Activated CD8-positive, alpha-beta T cell treated with anti-CD3 and anti-CD28 coated beads for 36 hours (primary cell): ENCODE measurements at regions of chr2 and their contacts with region 1.

Region 1: DNA sequence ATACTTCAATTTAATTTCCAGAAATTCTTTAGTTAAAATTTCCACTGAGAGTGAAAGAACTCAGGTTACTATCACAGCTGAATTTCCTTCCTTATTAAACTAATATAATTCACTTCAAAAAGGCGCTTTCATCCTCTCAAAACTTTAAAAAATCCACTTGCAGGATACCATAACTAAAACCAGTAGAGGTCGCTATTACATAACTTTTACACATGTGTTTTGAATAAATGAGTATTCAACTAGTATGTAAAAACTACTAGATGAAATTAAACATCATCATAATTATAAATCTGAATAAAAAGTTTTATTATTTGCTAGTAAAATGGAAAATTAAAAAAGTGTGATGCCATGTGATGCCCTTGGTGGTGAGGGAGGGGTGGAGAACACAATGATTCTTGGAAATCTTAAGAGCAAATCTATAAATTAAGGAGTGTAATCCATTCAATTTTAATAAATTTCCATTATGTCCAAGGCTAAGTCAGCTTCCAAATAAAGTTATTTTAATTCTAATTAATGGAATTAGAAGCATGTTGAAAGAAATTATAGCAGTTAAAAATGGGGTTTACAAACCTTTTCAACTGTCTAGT is 61.4 kb downstream of the SOS1 start:
- DNase-seq: no peak
- ATAC-seq: no peak
- H3K4me3 Mint-ChIP-seq: no peak overlapping the region
- H3K27ac Mint-ChIP-seq: no peak overlapping the region
- H3K4me1 Mint-ChIP-seq: peaks cover 12% of the 10 kb centered on the region
- H3K27me3 Mint-ChIP-seq: no peaks in the 10 kb centered on the region
- CTCF ChIP-seq: peak; percentile 82

Region 2: GRCh38 chr2:39027421-39027820 is 32.0 kb before region 1 on chr2:
- CTCF ChIA-PET with region 1: no interaction called
- POLR2A ChIA-PET with region 1: no interaction called
- intact Hi-C with region 1: no loop called
- DNase-seq: no peak
- ATAC-seq: no peak
- H3K4me3 Mint-ChIP-seq: no peak overlapping the region
- H3K27ac Mint-ChIP-seq: no peak overlapping the region
- H3K4me1 Mint-ChIP-seq: peaks cover 6% of the 10 kb centered on the region
- H3K27me3 Mint-ChIP-seq: no peaks in the 10 kb centered on the region
- CTCF ChIP-seq: no peak

Region 3: DNA sequence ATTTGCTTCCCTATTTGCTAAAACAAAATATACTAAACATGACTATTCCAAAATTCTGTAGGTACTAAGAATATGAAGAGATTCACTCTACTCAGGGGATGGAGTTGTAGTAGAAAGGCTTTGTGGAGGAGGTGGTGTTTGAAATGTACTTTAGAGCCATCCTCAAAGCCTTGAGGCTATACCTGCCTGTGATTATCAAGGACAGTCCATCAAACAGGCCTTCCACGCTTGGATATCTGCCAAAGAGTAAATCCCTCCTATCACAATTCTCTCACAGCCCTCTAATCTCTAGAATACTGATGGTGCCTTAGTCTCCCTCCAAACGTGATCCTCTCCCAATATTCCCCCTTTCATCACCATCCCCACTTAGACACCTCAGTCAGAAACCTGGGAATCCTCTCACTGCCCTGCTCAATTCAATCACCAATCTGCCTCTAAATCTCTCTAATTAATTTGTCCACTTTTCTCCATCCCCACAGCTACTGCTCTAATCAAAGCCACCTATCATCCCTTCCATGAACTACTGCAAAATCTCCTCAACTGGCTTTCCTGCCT is 48.3 kb after region 1 on chr2:
- CTCF ChIA-PET with region 1: interaction called, 10 read pairs
- POLR2A ChIA-PET with region 1: no interaction called
- intact Hi-C with region 1: no loop called
- DNase-seq: no peak
- ATAC-seq: no peak
- H3K4me3 Mint-ChIP-seq: no peak overlapping the region
- H3K27ac Mint-ChIP-seq: peak overlapping the region; percentile 37
- H3K4me1 Mint-ChIP-seq: peaks cover 53% of the 10 kb centered on the region
- H3K27me3 Mint-ChIP-seq: no peaks in the 10 kb centered on the region
- CTCF ChIP-seq: no peak

Region 4: DNA sequence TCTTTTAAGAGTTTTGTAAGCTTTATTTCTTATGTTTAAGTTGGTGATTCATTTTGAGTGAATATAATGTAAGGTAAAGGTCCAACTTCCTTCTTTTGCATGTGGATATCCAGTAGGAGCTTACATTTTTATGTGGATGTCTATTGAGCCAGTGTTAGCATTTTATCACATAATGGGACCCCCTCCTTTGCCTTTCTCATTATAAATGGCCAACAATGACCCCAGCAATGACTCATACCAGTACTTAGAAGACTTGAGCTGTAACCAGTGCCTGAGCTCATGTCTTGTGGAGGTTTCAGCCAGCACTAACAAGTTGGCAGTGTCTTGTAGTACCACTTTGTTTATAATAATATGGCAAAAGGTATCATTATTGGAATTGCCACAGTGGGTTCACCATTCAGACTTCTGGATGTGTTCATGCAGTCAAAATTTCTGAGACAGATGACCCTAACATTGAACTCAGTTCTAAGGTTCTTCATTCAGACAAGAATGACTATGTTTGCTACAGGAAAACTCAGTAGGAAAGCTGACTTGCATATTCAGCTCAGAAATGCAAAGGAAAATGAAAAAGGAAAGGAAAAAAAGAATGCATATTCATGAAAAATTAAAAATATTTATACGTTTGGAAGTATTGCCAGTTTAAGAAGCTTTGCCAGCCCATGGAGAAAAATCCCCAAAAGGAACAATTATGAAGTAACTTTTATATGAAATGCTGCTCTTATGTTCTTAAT is 143.3 kb after region 1 on chr2:
- CTCF ChIA-PET with region 1: interaction called, 10 read pairs
- POLR2A ChIA-PET with region 1: no interaction called
- intact Hi-C with region 1: no loop called
- DNase-seq: peak; percentile 32
- ATAC-seq: peak; percentile 86
- H3K4me3 Mint-ChIP-seq: no peak overlapping the region
- H3K27ac Mint-ChIP-seq: peak overlapping the region; percentile 63
- H3K4me1 Mint-ChIP-seq: peaks cover 22% of the 10 kb centered on the region
- H3K27me3 Mint-ChIP-seq: no peaks in the 10 kb centered on the region
- CTCF ChIP-seq: no peak

Region 5: DNA sequence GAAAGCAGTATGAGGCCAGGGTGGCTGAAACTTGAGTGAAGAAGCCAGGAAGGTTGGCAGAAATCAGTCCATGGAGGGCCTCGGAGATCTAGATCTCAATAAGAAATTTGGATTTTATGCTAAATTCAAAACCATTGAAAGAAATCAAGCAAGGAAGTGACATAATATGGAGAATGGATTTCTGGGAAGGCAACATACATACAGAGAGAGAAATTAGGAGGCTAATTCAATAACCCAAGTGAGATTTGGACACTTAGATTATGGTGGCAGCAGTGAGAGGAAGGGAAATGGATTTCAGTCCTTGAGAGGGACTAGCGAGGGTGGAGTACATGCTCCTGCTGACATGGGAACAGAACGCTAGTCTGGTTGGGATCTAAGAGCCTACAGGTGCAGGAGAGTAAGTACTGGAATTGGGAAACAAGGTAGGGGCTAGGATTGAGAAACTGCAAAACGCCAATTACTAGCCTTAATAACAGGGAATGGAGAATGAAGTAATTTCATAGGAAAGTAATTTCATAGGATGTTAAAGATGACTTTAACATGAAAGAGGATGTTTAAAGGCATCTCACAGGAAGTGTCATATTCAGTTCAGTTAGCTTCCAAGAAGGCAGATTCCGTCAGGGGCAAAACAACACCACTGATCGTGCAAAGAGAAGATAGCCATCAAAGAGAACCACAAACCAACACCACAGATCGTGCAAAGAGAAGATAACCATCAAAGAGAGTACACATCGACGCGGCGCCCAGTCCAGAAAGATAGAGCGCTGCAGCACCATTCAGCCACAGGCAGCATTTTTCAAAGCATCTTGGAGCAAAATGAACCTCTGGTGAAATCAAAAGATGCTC is 157.1 kb after region 1 on chr2:
- CTCF ChIA-PET with region 1: interaction called, 10 read pairs
- POLR2A ChIA-PET with region 1: no interaction called
- intact Hi-C with region 1: no loop called
- DNase-seq: peak; percentile 89
- ATAC-seq: peak; percentile 73
- H3K4me3 Mint-ChIP-seq: peak overlapping the region; percentile 47
- H3K27ac Mint-ChIP-seq: peak overlapping the region; percentile 94
- H3K4me1 Mint-ChIP-seq: peaks cover 63% of the 10 kb centered on the region
- H3K27me3 Mint-ChIP-seq: no peaks in the 10 kb centered on the region
- CTCF ChIP-seq: no peak